A549 (cell line): ENCODE measurements at regions of chr17 and their contacts with region 1.

Region 1: GRCh38 chr17:74361230-74362068 is at the start of gene BTBD17:
- DNase-seq: peak; percentile 67 to 74
- ATAC-seq: peak; percentile 78 to 94
- H3K4me3 ChIP-seq: no peak within 1 kb of the TSS
- H3K27ac ChIP-seq: no peak within 1 kb of the TSS
- H3K4me1 ChIP-seq: peaks cover 8% of the 10 kb centered on the region; the same call in 1 of the 3 replicates
- CTCF ChIP-seq: peak; percentile 66
- EP300 ChIP-seq: no peak
- POLR2A ChIP-seq: no peak
- RAD21 ChIP-seq: peak; percentile 58 to 63
- polyA plus RNA-seq, gene BTBD17: not detected in 2 replicates

Region 2: GRCh38 chr17:74212913-74213791 is 148.3 kb before region 1 on chr17 and contains the start of gene TTYH2:
- CTCF ChIA-PET with region 1: interaction called, 13 read pairs
- POLR2A ChIA-PET with region 1: no interaction called
- DNase-seq: peak; percentile 77 to 84
- ATAC-seq: peak; percentile 36 to 75
- H3K4me3 ChIP-seq: peak within 1 kb of the TSS; percentile 32
- H3K27ac ChIP-seq: peak within 1 kb of the TSS; percentile 39 to 76
- H3K4me1 ChIP-seq: peaks cover 30% of the 10 kb centered on the region; the same call in 2 of the 3 replicates
- CTCF ChIP-seq: peak; percentile 18; the same call in 2 of the 3 replicates
- EP300 ChIP-seq: no peak
- POLR2A ChIP-seq: peak; percentile 49
- RAD21 ChIP-seq: no peak
- polyA plus RNA-seq, gene TTYH2: 1.4 and 1.5 TPM in 2 replicates

Region 3: DNA sequence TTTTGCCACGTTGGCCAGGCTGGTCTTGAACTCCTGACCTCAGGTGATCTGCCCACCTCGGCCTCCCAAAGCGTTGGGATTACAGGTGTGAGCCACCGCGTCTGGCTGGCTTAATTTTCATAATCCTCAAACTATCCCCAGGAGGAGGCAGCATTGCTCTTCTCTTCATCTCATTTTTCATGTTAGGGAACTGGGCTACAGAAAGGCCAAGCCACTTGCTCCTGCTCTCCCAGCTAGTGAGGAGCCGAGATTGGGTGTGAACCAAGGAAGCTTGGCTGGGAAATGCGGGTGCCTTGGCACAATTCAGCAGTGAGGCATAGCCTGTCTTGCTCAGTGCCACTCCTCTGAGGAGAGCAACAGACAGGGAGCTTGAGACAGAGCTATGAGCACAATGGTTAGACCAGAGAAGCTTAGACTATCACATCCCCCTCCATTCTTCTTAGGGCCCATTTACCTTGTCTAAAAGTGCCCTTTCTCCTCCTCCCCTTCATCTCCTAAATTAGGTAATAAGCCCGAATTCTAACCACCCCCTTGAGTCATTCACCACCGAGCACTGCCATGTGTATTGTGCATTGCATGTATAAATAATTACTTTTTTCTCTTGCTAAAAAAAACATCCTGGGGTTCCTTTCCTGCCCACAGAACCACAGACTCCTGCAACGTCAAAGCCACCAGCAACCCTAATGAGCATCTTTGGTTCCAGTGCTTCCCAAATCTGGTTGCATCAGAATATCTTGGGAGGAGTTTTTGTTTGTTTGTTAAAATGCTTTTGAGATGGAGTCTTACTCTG is 55.4 kb before region 1 on chr17:
- CTCF ChIA-PET with region 1: interaction called, 124 read pairs
- POLR2A ChIA-PET with region 1: no interaction called
- DNase-seq: peak in 1 of 2 experiments; percentile 28
- ATAC-seq: no peak; a peak in 1 of 6 replicates
- H3K4me3 ChIP-seq: no peak overlapping the region
- H3K27ac ChIP-seq: no peak overlapping the region
- H3K4me1 ChIP-seq: 0 out of 3 replicates have a peak, but pooled peaks cover 3% of the 10 kb centered on the region
- CTCF ChIP-seq: peak; percentile 12; the same call in 2 of the 3 replicates
- EP300 ChIP-seq: no peak
- POLR2A ChIP-seq: no peak
- RAD21 ChIP-seq: peak in 1 of 2 experiments; percentile 46; a peak in 1 of 5 replicates

Region 4: DNA sequence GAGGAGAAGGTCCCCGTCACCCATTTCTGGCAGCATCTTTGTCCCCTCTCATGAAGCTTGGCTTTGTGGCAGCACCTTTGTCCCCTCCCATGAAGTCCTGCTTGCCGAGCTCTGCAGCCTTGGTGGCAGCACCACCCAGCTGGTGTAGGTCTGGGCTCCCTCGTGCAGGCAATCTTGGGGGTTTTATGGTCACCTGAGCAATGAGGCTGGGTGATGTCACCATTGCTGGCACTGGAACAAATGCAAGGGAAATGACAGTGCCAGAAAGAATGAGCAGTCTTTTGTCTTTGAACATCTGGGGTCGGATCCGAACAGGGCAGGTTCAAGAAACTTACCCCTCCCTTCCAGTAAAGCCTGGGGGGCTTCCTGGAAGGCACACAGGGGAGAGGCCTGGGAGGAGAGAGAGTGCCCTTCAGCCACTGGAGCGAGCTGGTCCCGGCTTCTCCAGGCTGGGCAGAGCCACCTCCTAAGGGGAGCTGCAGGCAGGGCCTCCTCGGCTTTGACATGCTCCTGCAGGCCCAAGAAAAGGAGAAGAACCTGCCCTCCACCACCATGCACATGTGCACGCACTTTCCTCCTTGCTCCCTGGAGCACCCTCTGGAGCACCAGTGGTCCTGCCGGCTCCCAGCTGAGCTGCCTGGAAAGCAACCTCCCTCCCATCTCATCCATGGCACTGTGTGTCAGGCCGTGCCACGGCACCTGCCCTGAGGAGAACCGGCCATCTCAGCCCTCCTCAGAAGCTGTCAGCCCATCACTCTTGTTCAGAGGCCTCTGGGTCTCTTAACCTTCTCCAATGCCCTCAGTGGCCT is 15.8 kb before region 1 on chr17:
- CTCF ChIA-PET with region 1: interaction called, 674 read pairs
- POLR2A ChIA-PET with region 1: no interaction called
- DNase-seq: no peak
- ATAC-seq: no peak
- H3K4me3 ChIP-seq: no peak overlapping the region
- H3K27ac ChIP-seq: no peak overlapping the region
- H3K4me1 ChIP-seq: no peaks in the 10 kb centered on the region
- CTCF ChIP-seq: no peak
- EP300 ChIP-seq: no peak
- POLR2A ChIP-seq: no peak
- RAD21 ChIP-seq: no peak

Region 5: GRCh38 chr17:74528491-74529199 is 167.2 kb after region 1 on chr17:
- CTCF ChIA-PET with region 1: interaction called, 59 read pairs
- POLR2A ChIA-PET with region 1: no interaction called
- DNase-seq: no peak
- ATAC-seq: no peak
- H3K4me3 ChIP-seq: no peak overlapping the region
- H3K27ac ChIP-seq: no peak overlapping the region
- H3K4me1 ChIP-seq: no peaks in the 10 kb centered on the region
- CTCF ChIP-seq: no peak
- EP300 ChIP-seq: no peak
- POLR2A ChIP-seq: no peak
- RAD21 ChIP-seq: no peak